BJ (cell line): ENCODE measurements at regions of chr1 and their contacts with region 1.

Region 1: GRCh38 chr1:156728597-156729462 is at the start of gene ISG20L2:
- DNase-seq: peak; percentile 87
- H3K4me3 ChIP-seq: peak within 1 kb of the TSS; percentile 89
- H3K27me3 ChIP-seq: no peaks in the 10 kb centered on the region
- CTCF ChIP-seq: no peak
- polyA plus RNA-seq, gene ISG20L2: 30.6 and 36.6 TPM in 2 replicates

Region 2: GRCh38 chr1:156528041-156528630 is 200.7 kb before region 1 on chr1:
- CTCF ChIA-PET with region 1: no interaction called
- POLR2A ChIA-PET with region 1: no interaction called
- DNase-seq: no peak
- H3K4me3 ChIP-seq: no peak overlapping the region
- H3K27me3 ChIP-seq: no peaks in the 10 kb centered on the region
- CTCF ChIP-seq: no peak

Region 3: GRCh38 chr1:156659994-156660751 is 68.7 kb before region 1 on chr1:
- CTCF ChIA-PET with region 1: interaction called, 30 read pairs
- POLR2A ChIA-PET with region 1: no interaction called
- DNase-seq: peak; percentile 85
- H3K4me3 ChIP-seq: no peak overlapping the region
- H3K27me3 ChIP-seq: peaks cover 18% of the 10 kb centered on the region
- CTCF ChIP-seq: peak; percentile 100

Region 4: DNA sequence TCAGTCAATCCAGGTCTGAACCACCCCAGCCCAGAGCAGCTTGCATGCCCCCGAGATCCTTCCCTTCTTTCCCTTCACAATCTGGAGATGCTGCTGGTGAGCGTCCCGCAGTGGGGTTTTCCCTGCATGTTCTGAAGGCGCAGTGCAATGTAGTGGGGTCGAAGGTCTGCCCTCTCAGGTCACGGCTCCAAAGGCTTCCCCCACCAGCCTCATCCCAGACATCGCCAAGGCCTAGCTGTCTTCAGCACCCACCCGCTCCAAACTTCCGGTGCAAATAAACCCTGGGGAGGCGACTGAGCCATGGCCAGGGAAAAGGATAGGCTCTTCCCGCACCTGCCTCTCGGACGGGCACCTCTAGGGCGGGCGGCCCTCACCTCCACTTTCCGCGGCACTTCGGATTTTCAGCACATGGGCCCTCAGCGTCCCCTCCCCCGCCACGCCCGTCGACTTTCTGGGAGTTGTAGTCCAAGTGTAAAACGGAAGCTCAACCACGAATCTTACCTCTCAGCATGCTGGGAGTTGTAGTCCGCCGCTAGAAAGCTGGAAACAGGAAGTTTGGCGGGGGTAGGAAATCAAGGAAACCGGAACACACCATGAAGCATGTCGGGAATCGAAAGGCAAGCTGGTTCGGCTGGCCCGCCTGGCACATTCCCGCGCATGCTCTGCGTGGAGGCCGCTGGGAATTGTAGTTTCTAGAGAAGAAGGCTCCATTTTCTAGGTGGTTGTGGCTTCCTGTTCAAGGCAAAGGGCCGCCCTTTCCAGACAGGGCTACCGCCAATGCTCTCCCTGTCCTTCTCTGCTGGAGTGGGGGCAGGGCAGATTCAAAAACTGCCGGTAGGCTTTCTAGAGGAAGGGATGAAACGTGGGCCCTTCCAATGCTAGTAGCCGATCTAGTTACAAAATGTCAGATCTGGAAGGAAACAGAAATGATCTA is 12.1 kb after region 1 on chr1 and contains the start of gene MRPL24:
- CTCF ChIA-PET with region 1: interaction called, 19 read pairs
- POLR2A ChIA-PET with region 1: interaction called, 3 read pairs
- DNase-seq: peak; percentile 99
- H3K4me3 ChIP-seq: peak within 1 kb of the TSS; percentile 53
- H3K27me3 ChIP-seq: no peaks in the 10 kb centered on the region
- CTCF ChIP-seq: no peak
- polyA plus RNA-seq, gene MRPL24: 104 and 120 TPM in 2 replicates

Region 5: DNA sequence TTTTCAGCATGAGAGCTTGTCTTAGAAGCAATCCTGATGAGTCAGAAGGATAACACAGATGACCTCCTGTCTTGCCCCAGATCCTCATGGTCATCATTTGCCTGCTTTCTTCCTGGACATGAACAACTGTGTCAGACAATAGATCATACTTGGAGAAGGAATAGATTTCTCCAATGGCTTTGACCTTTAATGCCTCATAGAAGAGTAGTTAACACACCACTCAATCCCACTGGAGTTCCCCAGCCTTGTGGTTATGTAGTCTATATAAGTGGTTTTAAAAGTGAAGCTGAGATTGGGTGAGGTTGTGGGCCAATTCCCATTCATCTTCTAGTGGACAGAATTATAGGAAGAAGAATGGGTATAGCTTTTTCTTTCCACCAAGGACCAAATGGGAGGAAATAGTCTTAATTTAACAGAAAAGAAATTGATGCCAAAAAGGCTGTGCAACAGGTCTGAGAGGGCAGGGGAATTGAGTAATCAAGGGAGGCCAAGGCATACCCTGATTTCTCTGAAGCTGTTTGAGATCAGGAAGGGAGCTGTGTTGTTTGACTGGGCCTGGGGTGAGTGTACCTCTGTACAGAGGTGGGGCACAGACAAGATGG is 52.9 kb after region 1 on chr1:
- CTCF ChIA-PET with region 1: interaction called, 14 read pairs
- POLR2A ChIA-PET with region 1: no interaction called
- DNase-seq: no peak
- H3K4me3 ChIP-seq: no peak overlapping the region
- H3K27me3 ChIP-seq: no peaks in the 10 kb centered on the region
- CTCF ChIP-seq: no peak

Region 6: GRCh38 chr1:156815307-156815826 is 86.5 kb after region 1 on chr1:
- CTCF ChIA-PET with region 1: no interaction called
- POLR2A ChIA-PET with region 1: no interaction called
- DNase-seq: peak; percentile 66
- H3K4me3 ChIP-seq: no peak overlapping the region
- H3K27me3 ChIP-seq: no peaks in the 10 kb centered on the region; the same call in 1 of the 2 replicates
- CTCF ChIP-seq: peak; percentile 19; the same call in 1 of the 2 replicates

Region 7: GRCh38 chr1:156860113-156860627 is 131.3 kb after region 1 on chr1:
- CTCF ChIA-PET with region 1: interaction called, 140 read pairs
- POLR2A ChIA-PET with region 1: no interaction called
- DNase-seq: no peak
- H3K4me3 ChIP-seq: peak overlapping the region; percentile 30
- H3K27me3 ChIP-seq: peaks cover 56% of the 10 kb centered on the region
- CTCF ChIP-seq: peak; percentile 84

Region 8: GRCh38 chr1:156927215-156928042 is 198.6 kb after region 1 on chr1:
- CTCF ChIA-PET with region 1: interaction called, 38 read pairs
- POLR2A ChIA-PET with region 1: no interaction called
- DNase-seq: no peak
- H3K4me3 ChIP-seq: peak overlapping the region; percentile 32
- H3K27me3 ChIP-seq: peaks cover 12% of the 10 kb centered on the region
- CTCF ChIP-seq: peak; percentile 89